Brain microvascular endothelial cell (primary cell): ENCODE measurements at regions of chr2 and their contacts with region 1.

Region 1: DNA sequence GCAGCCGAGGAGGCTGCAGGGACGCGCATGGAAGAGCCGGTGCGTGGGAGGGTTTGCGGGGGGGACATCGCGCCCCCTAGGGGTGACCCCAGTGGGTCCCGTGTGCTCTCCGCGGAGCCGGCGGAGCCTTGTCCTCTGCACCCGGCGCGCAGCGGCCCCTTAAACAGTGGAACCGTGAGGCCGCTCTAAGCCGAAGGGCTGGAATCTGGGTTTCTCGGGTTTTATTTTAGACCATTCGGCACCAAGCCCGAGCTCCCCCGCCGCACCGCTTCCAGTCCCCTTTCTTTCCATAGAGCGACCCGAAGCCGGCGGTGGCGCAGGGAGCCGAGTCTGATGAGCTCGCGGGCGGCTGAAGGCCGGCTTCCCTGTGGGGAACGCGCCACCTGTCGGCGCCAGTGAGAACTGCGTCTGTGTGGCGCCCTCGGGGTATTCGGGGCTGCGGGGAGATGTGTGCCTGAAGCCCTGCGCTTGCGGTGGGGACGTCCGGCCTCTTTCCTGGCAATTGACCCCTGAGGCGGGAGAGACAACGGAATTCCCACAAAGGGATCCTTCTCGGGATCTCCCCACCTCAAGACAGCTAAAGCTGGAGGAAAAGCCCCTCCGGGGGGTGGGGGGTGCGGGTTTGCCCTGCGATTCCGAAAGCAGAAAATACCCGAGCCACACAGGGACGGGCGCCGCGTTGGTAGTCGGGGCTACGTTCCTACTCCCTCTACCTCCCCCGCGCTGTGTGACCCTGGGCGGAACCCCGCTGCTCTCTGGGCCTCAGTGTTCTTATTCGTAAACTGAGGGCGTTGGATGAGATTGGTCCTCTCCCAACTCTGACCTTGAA is 8.2 kb upstream of the EN1 start:
- DNase-seq: peak; percentile 53
- H3K4me3 ChIP-seq: peak overlapping the region; percentile 15
- H3K27ac ChIP-seq: no peak overlapping the region
- H3K27me3 ChIP-seq: peaks cover 91% of the 10 kb centered on the region
- CTCF ChIP-seq: peak; percentile 93

Region 2: GRCh38 chr2:118221666-118222594 is 633.7 kb before region 1 on chr2:
- in situ Hi-C with region 1: loop called (anchors 25 kb)
- DNase-seq: peak; percentile 78
- H3K4me3 ChIP-seq: no peak overlapping the region
- H3K27ac ChIP-seq: no peak overlapping the region
- H3K27me3 ChIP-seq: peaks cover 39% of the 10 kb centered on the region
- CTCF ChIP-seq: peak; percentile 77

Region 3: DNA sequence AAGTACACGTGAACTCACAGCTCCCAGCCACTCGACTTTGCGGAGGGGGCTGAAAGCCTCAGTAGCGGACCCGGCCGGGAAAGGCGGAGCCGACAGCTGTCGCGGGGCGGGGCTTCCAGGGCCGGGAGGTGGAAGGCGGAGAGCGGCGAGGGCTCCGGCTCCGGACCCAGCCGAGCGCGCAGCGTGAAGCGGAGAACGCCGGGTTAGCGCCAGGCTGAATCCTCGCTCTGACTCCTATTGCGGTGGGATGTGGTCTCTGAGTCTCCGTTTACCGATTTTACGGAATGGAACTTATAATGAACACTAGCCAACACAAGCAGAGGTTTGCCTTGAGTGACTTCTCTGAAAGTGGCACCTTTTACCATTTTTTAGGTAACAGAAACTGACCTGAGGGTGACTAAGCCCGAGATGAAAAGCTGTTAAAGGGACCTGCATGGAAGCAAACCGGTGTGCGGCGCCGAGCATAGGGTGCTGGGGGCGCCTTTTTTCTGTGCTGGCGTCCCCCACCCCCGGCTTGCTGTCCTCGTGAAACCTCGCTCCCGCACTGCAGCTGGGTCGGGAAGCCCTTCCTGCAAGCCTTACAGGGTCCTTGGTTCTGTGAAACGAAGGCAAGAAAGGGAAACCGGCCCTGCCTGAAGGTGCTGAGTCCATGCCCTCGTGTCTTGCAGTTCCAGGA is 81.1 kb before region 1 on chr2:
- in situ Hi-C with region 1: no loop called
- DNase-seq: peak; percentile 36
- H3K4me3 ChIP-seq: peak overlapping the region; percentile 59
- H3K27ac ChIP-seq: no peak overlapping the region
- H3K27me3 ChIP-seq: peaks cover 3% of the 10 kb centered on the region
- CTCF ChIP-seq: no peak